Caco-2 (cell line): ENCODE measurements at regions of chr6 and their contacts with region 1.

Region 1: DNA sequence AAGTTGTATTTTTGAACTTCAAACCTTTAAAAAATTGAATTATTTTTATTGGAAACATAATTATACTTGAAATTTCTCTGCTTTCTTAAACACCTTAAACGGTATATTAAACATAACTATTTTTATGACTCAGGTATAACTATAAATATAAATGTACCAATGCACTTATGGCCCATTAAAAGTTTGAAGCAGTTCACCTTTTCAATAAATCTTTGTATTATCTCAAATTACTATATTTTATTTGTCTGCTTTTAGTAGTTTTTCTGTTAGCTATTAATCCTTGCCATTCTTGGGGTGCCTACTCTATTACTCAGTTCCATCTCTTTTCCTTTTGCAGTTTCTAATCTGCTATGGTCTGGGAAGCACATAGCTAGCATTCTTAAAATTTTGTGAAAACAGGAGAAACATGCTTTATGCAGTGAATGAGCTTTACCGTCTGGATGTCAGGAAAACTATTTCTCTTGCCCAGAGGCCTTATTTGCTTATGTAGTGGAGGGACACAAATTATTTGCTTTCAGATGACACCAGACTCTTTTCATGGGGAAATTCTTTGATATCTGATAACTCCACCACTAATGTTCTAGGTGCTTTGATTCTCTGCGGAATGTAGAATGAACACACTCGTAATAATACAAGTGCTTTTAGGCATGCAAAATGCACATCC is 378.9 kb upstream of the CITED2 start:
- DNase-seq: peak; percentile 38 to 56
- H3K4me3 ChIP-seq: no peak overlapping the region
- H3K4me3 Mint-ChIP-seq: no peak overlapping the region
- H3K27ac Mint-ChIP-seq: peak overlapping the region; percentile 77
- H3K4me1 ChIP-seq: peaks cover 77% of the 10 kb centered on the region
- H3K4me1 Mint-ChIP-seq: peaks cover 58% of the 10 kb centered on the region
- H3K27me3 ChIP-seq: no peaks in the 10 kb centered on the region
- H3K27me3 Mint-ChIP-seq: no peaks in the 10 kb centered on the region
- CTCF ChIP-seq: no peak

Region 2: GRCh38 chr6:139369568-139370282 is 383.6 kb before region 1 on chr6:
- CTCF ChIA-PET with region 1: interaction called, 3 read pairs
- POLR2A ChIA-PET with region 1: interaction called, 8 read pairs
- intact Hi-C with region 1: loop called (anchors 2 kb)
- DNase-seq: peak in 1 of 2 experiments; percentile 46
- H3K4me3 ChIP-seq: no peak overlapping the region
- H3K4me3 Mint-ChIP-seq: peak overlapping the region; percentile 48
- H3K27ac Mint-ChIP-seq: peak overlapping the region; percentile 61
- H3K4me1 ChIP-seq: peaks cover 45% of the 10 kb centered on the region
- H3K4me1 Mint-ChIP-seq: peaks cover 22% of the 10 kb centered on the region
- H3K27me3 ChIP-seq: no peaks in the 10 kb centered on the region
- H3K27me3 Mint-ChIP-seq: no peaks in the 10 kb centered on the region
- CTCF ChIP-seq: peak; percentile 62 to 64

Region 3: GRCh38 chr6:139588076-139588639 is 165.2 kb before region 1 on chr6:
- CTCF ChIA-PET with region 1: no interaction called
- POLR2A ChIA-PET with region 1: no interaction called
- intact Hi-C with region 1: loop called (anchors 1 kb)
- DNase-seq: peak; percentile 30 to 45
- H3K4me3 ChIP-seq: no peak overlapping the region
- H3K4me3 Mint-ChIP-seq: peak overlapping the region; percentile 22
- H3K27ac Mint-ChIP-seq: peak overlapping the region; percentile 91
- H3K4me1 ChIP-seq: peaks cover 71% of the 10 kb centered on the region
- H3K4me1 Mint-ChIP-seq: peaks cover 71% of the 10 kb centered on the region
- H3K27me3 ChIP-seq: no peaks in the 10 kb centered on the region
- H3K27me3 Mint-ChIP-seq: no peaks in the 10 kb centered on the region
- CTCF ChIP-seq: no peak

Region 4: GRCh38 chr6:139708337-139709199 is 44.8 kb before region 1 on chr6:
- CTCF ChIA-PET with region 1: no interaction called
- POLR2A ChIA-PET with region 1: no interaction called
- intact Hi-C with region 1: loop called (anchors 1 kb)
- DNase-seq: peak; percentile 64 to 76
- H3K4me3 ChIP-seq: no peak overlapping the region
- H3K4me3 Mint-ChIP-seq: peak overlapping the region; percentile 54
- H3K27ac Mint-ChIP-seq: peak overlapping the region; percentile 72
- H3K4me1 ChIP-seq: peaks cover 38% of the 10 kb centered on the region
- H3K4me1 Mint-ChIP-seq: peaks cover 12% of the 10 kb centered on the region
- H3K27me3 ChIP-seq: no peaks in the 10 kb centered on the region
- H3K27me3 Mint-ChIP-seq: no peaks in the 10 kb centered on the region
- CTCF ChIP-seq: no peak

Region 5: GRCh38 chr6:139764498-139764986 is 11.2 kb after region 1 on chr6:
- CTCF ChIA-PET with region 1: interaction called, 3 read pairs
- POLR2A ChIA-PET with region 1: no interaction called
- intact Hi-C with region 1: loop called (anchors 1 kb)
- DNase-seq: peak; percentile 42 to 45
- H3K4me3 ChIP-seq: no peak overlapping the region
- H3K4me3 Mint-ChIP-seq: peak overlapping the region; percentile 34
- H3K27ac Mint-ChIP-seq: peak overlapping the region; percentile 78
- H3K4me1 ChIP-seq: peaks cover 54% of the 10 kb centered on the region
- H3K4me1 Mint-ChIP-seq: peaks cover 48% of the 10 kb centered on the region
- H3K27me3 ChIP-seq: no peaks in the 10 kb centered on the region
- H3K27me3 Mint-ChIP-seq: no peaks in the 10 kb centered on the region
- CTCF ChIP-seq: no peak

Region 6: GRCh38 chr6:139996253-139996834 is 243.0 kb after region 1 on chr6:
- CTCF ChIA-PET with region 1: no interaction called
- POLR2A ChIA-PET with region 1: no interaction called
- intact Hi-C with region 1: loop called (anchors 1 kb)
- DNase-seq: peak; percentile 64 to 71
- H3K4me3 ChIP-seq: no peak overlapping the region
- H3K4me3 Mint-ChIP-seq: no peak overlapping the region
- H3K27ac Mint-ChIP-seq: no peak overlapping the region
- H3K4me1 ChIP-seq: no peaks in the 10 kb centered on the region
- H3K4me1 Mint-ChIP-seq: peaks cover 6% of the 10 kb centered on the region
- H3K27me3 ChIP-seq: no peaks in the 10 kb centered on the region
- H3K27me3 Mint-ChIP-seq: no peaks in the 10 kb centered on the region
- CTCF ChIP-seq: peak; percentile 54 to 55